Endothelial cell of umbilical vein (primary cell): ENCODE measurements at regions of chr6 and their contacts with region 1.

Region 1: GRCh38 chr6:156686995-156687788 is 90.0 kb upstream of the ARID1B start:
- DNase-seq: peak; percentile 85
- H3K4me3 ChIP-seq: peak overlapping the region; percentile 82 to 91 (median 86)
- H3K27ac ChIP-seq: peak overlapping the region; percentile 98
- H3K4me1 ChIP-seq: peaks cover 11% of the 10 kb centered on the region
- H3K27me3 ChIP-seq: peaks cover 5 to 18% of the 10 kb centered on the region in 2 experiments
- CTCF ChIP-seq: no peak
- POLR2A ChIP-seq: peak; percentile 68

Region 2: DNA sequence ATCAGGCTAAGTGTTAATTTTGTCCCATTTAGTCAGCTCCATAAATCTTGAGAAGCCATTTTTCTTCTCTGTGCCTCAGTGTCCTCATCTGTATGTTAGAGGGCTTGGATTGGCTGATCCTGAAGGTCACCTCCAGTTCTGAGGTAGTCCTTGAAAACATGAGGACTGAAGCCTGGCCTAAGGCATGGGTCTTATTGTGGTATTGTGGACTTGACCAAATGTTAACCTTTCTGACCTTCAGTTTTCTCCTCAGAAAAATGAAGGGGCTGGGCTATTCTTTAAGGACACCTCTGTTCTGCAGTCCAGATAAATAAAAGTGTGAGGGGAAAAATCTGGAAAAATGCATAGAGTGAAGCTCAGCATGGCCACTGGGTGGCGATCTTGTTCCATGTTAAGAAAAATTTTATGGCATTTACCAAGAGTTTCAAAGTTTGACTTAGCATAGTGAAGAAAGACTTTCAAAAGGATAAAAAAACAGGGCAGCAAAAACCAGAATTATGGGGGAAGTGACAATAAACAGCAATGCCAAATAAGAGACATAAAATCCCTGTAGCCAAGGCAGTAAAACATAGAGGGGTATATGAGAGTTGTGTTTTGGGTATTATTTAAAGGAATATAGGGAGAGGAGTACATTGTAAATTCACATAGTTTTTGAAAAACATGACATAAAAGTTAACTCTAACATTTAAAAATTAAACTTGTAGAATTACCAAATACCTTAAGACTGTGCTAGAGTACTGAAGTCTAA is 1359.7 kb before region 1 on chr6:
- CTCF ChIA-PET with region 1: no interaction called
- POLR2A ChIA-PET with region 1: no interaction called
- dilution Hi-C with region 1: no loop called
- intact Hi-C with region 1: loop called (anchors 10 kb)
- DNase-seq: peak; percentile 84
- H3K4me3 ChIP-seq: no peak overlapping the region
- H3K27ac ChIP-seq: peak overlapping the region; percentile 7
- H3K4me1 ChIP-seq: peaks cover 9% of the 10 kb centered on the region
- H3K27me3 ChIP-seq: no peaks in the 10 kb centered on the region
- CTCF ChIP-seq: peak; percentile 50 to 58
- POLR2A ChIP-seq: no peak

Region 3: GRCh38 chr6:156348424-156348823 is 338.8 kb before region 1 on chr6:
- CTCF ChIA-PET with region 1: no interaction called
- POLR2A ChIA-PET with region 1: no interaction called
- dilution Hi-C with region 1: no loop called
- intact Hi-C with region 1: loop called (anchors 5 kb)
- DNase-seq: peak; percentile 86
- H3K4me3 ChIP-seq: peak overlapping the region in 1 of 3 experiments; percentile 20
- H3K27ac ChIP-seq: peak overlapping the region; percentile 46
- H3K4me1 ChIP-seq: peaks cover 23% of the 10 kb centered on the region
- H3K27me3 ChIP-seq: no peaks in the 10 kb centered on the region
- CTCF ChIP-seq: no peak
- POLR2A ChIP-seq: no peak

Region 4: DNA sequence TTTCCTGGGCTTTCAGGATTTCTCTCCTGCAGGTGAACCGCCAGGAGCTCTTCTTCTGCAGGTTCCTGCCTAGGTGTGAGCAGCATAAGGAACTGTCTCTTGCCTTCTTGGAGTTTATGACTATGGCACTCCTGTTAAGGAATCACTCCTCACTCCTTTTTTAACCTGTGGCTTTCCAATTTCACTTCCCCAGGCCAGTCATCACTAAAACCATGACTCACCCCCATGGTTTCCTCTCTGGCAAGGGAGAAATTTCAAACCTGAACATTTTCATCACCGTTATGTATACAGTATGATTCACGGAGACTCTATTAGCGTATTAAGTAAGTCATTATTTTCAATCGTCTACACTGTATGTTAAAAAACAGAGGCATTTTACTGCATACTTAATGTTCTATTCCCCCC is 11.8 kb after region 1 on chr6:
- CTCF ChIA-PET with region 1: interaction called, 5 read pairs
- POLR2A ChIA-PET with region 1: no interaction called
- dilution Hi-C with region 1: no loop called
- intact Hi-C with region 1: loop called (anchors 1 kb)
- DNase-seq: peak; percentile 74
- H3K4me3 ChIP-seq: no peak overlapping the region
- H3K27ac ChIP-seq: peak overlapping the region; percentile 12
- H3K4me1 ChIP-seq: peaks cover 12% of the 10 kb centered on the region
- H3K27me3 ChIP-seq: peaks cover 0 to under 1% of the 10 kb centered on the region in 2 experiments
- CTCF ChIP-seq: no peak
- POLR2A ChIP-seq: no peak

Region 5: GRCh38 chr6:156953479-156954146 is 266.4 kb after region 1 on chr6:
- CTCF ChIA-PET with region 1: no interaction called
- POLR2A ChIA-PET with region 1: no interaction called
- dilution Hi-C with region 1: no loop called
- intact Hi-C with region 1: no loop called
- DNase-seq: peak; percentile 93
- H3K4me3 ChIP-seq: no peak overlapping the region
- H3K27ac ChIP-seq: no peak overlapping the region
- H3K4me1 ChIP-seq: peaks cover 38% of the 10 kb centered on the region
- H3K27me3 ChIP-seq: no peaks in the 10 kb centered on the region
- CTCF ChIP-seq: peak in 1 of 2 donors; percentile 6
- POLR2A ChIP-seq: no peak

Region 6: DNA sequence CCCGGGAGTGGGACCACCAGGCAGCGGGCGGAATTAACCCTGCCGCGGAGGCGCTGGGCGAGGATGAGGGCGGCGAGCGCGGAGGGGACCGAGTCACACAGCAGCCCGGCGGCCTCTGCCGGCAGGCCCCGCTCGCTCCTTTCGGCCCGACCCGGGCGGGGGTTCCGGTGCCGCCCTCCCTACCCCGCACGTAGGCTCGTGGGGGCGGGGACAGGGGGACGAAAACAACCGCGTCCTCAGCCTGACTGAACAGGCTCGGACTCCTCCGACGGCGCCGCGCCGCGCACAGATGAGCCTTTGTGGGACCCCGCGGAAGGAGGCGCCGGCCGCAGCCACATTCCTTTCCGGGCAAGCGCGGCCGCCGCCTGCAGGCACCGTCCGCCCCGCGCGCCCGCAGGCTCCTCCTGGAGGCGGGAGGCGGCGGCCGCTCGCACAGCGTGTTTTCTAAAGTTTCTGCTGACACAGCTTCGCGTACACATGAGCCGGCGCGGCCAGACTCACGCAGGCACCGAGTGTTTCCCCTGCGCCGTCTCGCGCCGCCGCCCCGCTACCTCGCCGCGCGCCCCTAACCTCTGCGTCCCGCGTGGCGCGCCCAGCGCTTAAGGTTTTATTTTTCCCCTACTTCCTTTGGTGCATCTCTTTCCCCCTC is 334.3 kb after region 1 on chr6:
- CTCF ChIA-PET with region 1: interaction called, 3 read pairs
- POLR2A ChIA-PET with region 1: no interaction called
- dilution Hi-C with region 1: no loop called
- intact Hi-C with region 1: loop called (anchors 1 kb)
- DNase-seq: peak; percentile 85
- H3K4me3 ChIP-seq: peak overlapping the region; percentile 39 to 94 (median 92)
- H3K27ac ChIP-seq: peak overlapping the region; percentile 92
- H3K4me1 ChIP-seq: peaks cover 18% of the 10 kb centered on the region
- H3K27me3 ChIP-seq: no peaks in the 10 kb centered on the region
- CTCF ChIP-seq: peak; percentile 24 to 46
- POLR2A ChIP-seq: peak; percentile 94